ENCODE measurements at regions of chr2 and their contacts with region 1.

Region 1: DNA sequence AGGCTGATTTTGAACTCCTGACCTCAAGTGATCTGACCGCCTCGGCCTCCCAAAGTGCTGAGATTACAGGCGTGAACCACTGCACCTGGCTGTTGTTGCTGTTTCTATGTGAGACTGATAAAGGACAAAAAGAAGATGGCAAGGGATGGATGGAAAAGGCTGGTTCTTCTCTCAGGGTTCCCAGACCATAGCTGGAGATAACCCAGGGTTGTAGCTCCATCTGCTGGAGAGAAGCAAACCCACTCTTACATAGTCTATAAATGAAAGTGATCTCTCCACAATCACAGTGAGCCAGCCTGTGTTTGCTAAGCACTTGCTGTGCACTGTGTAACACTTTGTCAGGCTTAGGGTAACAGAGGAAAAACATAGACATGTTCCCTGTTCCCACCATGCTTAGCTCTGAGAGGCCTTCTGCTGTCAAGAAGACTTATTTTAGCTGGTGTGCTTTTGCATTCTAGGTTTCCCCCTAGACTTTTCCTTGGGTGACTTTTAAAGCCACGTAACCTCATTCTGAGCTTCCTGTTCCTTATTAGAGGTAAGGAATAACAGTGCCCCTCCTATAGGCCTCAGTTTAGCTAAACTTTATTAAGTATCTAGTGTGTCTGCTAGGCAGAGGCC is 49.7 kb downstream of the LIMS1 start:
- DNase-seq: peak in 1 of 3 donors; percentile 64
- ATAC-seq: peak; percentile 77 to 90 (median 86)
- H3K4me3 ChIP-seq: no peak overlapping the region
- H3K27ac ChIP-seq: no peak overlapping the region
- H3K4me1 ChIP-seq: peaks cover 0 to 25% (median 4%) of the 10 kb centered on the region in 4 donors
- H3K27me3 ChIP-seq: no peaks in the 10 kb centered on the region
- CTCF ChIP-seq: peak; percentile 80 to 90 (median 84)
- POLR2A ChIP-seq: no peak

Region 2: GRCh38 chr2:108215794-108216211 is 368.2 kb before region 1 on chr2:
- intact Hi-C with region 1: loop called in 1 of 2 experiments (anchors 10 kb)
- DNase-seq: peak; percentile 28 to 60 (median 52)
- ATAC-seq: peak; percentile 82 to 99 (median 95)
- H3K4me3 ChIP-seq: no peak overlapping the region
- H3K27ac ChIP-seq: no peak overlapping the region
- H3K4me1 ChIP-seq: no peaks in the 10 kb centered on the region
- H3K27me3 ChIP-seq: no peaks in the 10 kb centered on the region
- CTCF ChIP-seq: peak in 3 of 4 donors; percentile 18 to 63 (median 37)
- POLR2A ChIP-seq: no peak

Region 3: GRCh38 chr2:108348816-108349570 is 235.0 kb before region 1 on chr2:
- intact Hi-C with region 1: loop called in 1 of 2 experiments (anchors 5 kb)
- DNase-seq: no peak
- ATAC-seq: no peak
- H3K4me3 ChIP-seq: no peak overlapping the region
- H3K27ac ChIP-seq: no peak overlapping the region
- H3K4me1 ChIP-seq: no peaks in the 10 kb centered on the region
- H3K27me3 ChIP-seq: no peaks in the 10 kb centered on the region
- CTCF ChIP-seq: no peak
- POLR2A ChIP-seq: no peak

Measured in right lobe of liver (tissue), 6 donors.